ENCODE measurements at regions of chr6 and their contacts with region 1.

Region 1: DNA sequence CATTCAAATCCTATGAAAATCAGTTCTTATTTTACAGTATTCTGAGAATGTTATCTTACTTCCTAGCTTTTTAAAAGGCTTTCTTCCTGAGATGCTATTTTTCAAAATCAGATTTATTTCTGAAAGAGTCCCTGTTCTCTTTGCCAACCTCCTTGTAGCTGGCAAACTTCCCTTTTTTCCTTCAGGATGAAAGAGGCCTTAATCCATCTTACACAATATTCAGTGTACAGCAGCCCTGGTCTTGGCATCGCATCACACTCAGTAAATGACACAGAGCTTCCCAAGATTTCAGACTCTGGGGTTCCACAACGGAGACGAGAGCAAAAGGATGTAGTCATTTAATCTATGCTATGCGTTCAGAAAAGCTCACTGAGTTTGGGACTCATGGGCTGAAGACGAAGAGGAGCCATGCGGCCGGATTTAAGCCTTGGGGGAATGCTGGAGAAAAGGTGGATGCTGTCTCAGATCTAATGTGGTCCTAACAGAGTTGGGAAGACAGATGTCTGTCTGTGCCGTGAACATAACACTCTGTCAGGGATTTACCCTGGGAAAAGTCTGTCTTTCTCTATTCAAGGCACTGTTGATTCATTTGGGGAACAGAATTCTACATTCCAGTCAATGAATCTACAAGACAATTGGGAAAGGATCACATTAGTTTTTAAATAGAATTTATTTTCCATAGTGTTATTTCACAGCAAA is 616.4 kb upstream of the AGPAT4 start:
- DNase-seq: no peak
- H3K4me3 ChIP-seq: no peak overlapping the region
- CTCF ChIP-seq: no peak

Region 2: GRCh38 chr6:161832583-161832982 is 57.7 kb before region 1 on chr6:
- in situ Hi-C with region 1: loop called (anchors 5 kb)
- DNase-seq: no peak
- H3K4me3 ChIP-seq: no peak overlapping the region
- CTCF ChIP-seq: no peak

Region 3: GRCh38 chr6:161954077-161954476 is 63.8 kb after region 1 on chr6:
- in situ Hi-C with region 1: no loop called
- DNase-seq: no peak
- H3K4me3 ChIP-seq: no peak overlapping the region
- CTCF ChIP-seq: no peak